Activated naive CD8-positive, alpha-beta T cell treated with anti-CD3 and anti-CD28 coated beads, Interleukin-2, amount 10 ng/mL, durations not matched to agents 7 days and 5 days (primary cell): ENCODE measurements at regions of chr5 and their contacts with region 1.

Region 1: GRCh38 chr5:115625579-115626444 is at the start of gene TMED7:
- DNase-seq: peak; percentile 99
- ATAC-seq: peak; percentile 94
- H3K4me3 Mint-ChIP-seq: no peak within 1 kb of the TSS
- H3K27ac Mint-ChIP-seq: peak within 1 kb of the TSS; percentile 89
- H3K4me1 Mint-ChIP-seq: peaks cover 17% of the 10 kb centered on the region
- H3K27me3 Mint-ChIP-seq: no peaks in the 10 kb centered on the region
- total RNA-seq, gene TMED7: 46.0 to 52.5 TPM

Region 2: DNA sequence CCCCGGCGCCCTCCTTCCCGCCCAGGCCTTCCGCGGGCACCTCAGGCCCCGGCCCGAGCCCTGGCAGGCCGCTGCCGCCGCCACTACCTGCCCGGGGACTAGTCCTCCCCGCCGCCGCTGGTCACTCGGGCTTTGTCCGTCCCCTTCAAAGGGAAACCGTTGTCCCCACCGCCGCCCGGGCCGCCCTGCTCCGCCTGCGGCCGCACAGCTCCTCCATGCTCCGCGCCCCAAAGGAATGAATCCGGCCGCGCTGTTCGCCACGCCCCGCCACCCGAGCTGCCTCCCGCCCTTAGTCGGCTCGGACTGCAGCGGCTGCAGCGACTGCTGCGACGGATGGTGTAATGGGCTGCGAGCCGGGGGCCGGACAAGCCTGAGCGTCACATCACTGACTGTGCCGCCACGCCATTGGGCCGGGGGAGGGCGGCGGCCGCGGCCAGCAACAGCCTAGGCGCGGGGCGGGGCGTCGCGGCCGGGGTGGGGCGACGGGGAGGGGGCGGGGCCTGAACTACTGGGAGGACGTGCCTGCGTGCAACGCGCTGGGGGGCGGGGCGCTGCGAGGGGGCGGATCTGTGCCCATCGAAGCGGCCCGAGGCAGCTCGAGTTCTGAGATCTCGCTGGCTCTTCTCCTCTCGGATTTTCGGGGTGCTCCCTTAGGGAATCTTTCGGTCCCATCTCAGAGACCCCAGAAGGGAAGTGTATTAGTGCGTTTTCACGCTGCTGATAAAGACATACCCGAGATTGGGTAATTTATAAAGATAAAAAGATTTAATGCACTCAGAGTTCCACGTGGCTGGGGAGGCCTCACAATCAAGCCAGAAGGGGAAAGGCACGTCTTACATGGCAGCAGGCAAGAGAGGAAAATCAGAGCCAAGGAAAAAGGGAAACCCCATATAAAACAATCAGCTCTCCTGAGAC is 81.1 kb before region 1 on chr5 and contains the start of gene FEM1C:
- POLR2A ChIA-PET with region 1: interaction called, 17 read pairs
- DNase-seq: peak; percentile 98
- ATAC-seq: peak; percentile 98
- H3K4me3 Mint-ChIP-seq: peak within 1 kb of the TSS; percentile 96
- H3K27ac Mint-ChIP-seq: peak within 1 kb of the TSS; percentile 100
- H3K4me1 Mint-ChIP-seq: peaks cover 28% of the 10 kb centered on the region
- H3K27me3 Mint-ChIP-seq: no peaks in the 10 kb centered on the region
- total RNA-seq, gene FEM1C: 14.9 to 15.6 TPM

Region 3: DNA sequence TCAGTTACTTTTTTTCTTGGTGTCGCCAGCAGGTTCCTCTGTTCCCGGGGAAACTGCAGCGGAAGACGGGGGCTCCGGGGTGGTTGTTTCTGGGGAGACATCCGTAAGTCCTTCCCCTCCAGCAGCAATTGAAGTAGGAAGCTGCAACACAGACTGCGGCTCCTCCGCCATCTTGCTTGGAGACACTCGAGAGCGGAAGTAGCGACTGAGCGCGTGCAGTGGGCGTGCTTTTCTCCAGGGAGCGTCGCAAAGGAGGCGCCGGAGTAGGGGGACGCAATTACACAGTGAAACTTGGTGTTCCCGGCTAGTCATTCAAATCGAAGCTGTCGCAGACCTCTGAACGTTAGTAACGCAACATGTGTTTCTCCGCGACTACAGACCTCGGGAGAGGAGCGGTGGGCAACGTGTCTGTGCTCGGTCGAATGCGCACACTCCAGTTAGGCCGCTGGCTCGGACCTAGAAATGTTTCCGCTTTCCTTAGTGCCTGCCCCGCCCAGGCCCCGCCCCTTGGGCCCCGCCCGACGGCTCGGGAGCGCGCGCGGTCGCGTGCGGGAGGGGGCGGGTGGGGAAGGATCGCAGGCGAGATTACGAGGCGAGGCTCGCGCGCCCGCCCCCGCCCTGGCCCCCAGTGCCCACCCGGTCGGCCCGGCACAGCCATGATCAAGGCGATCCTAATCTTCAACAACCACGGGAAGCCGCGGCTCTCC is 215.7 kb after region 1 on chr5 and contains the starts of genes AP3S1 and ATG12:
- POLR2A ChIA-PET with region 1: interaction called, 12 read pairs
- DNase-seq: peak; percentile 97
- ATAC-seq: peak; percentile 89
- H3K4me3 Mint-ChIP-seq: peak within 1 kb of the TSS; percentile 96
- H3K27ac Mint-ChIP-seq: peak within 1 kb of the TSS; percentile 99
- H3K4me1 Mint-ChIP-seq: peaks cover 39% of the 10 kb centered on the region
- H3K27me3 Mint-ChIP-seq: no peaks in the 10 kb centered on the region
- total RNA-seq, gene AP3S1: 82.6 to 83.3 TPM
- total RNA-seq, gene ATG12: 46.5 to 48.9 TPM